ENCODE measurements at regions of chr2 and their contacts with region 1.

Region 1: GRCh38 chr2:174158003-174158402 is 90.3 kb downstream of the OLA1 start:
- DNase-seq: peak; percentile 75
- H3K4me3 Mint-ChIP-seq: no peak overlapping the region
- H3K27ac Mint-ChIP-seq: no peak overlapping the region
- H3K4me1 Mint-ChIP-seq: peaks cover 6% of the 10 kb centered on the region
- H3K27me3 Mint-ChIP-seq: no peaks in the 10 kb centered on the region

Region 2: GRCh38 chr2:174198822-174199564 is 41.0 kb after region 1 on chr2:
- intact Hi-C with region 1: no loop called
- DNase-seq: no peak
- H3K4me3 Mint-ChIP-seq: no peak overlapping the region
- H3K27ac Mint-ChIP-seq: no peak overlapping the region
- H3K4me1 Mint-ChIP-seq: no peaks in the 10 kb centered on the region
- H3K27me3 Mint-ChIP-seq: no peaks in the 10 kb centered on the region

Region 3: GRCh38 chr2:174326161-174327020 is 168.4 kb after region 1 on chr2:
- intact Hi-C with region 1: loop called (anchors 10 kb)
- DNase-seq: peak; percentile 76
- H3K4me3 Mint-ChIP-seq: peak overlapping the region; percentile 80
- H3K27ac Mint-ChIP-seq: no peak overlapping the region
- H3K4me1 Mint-ChIP-seq: peaks cover 16% of the 10 kb centered on the region
- H3K27me3 Mint-ChIP-seq: peaks cover 86% of the 10 kb centered on the region

Region 4: DNA sequence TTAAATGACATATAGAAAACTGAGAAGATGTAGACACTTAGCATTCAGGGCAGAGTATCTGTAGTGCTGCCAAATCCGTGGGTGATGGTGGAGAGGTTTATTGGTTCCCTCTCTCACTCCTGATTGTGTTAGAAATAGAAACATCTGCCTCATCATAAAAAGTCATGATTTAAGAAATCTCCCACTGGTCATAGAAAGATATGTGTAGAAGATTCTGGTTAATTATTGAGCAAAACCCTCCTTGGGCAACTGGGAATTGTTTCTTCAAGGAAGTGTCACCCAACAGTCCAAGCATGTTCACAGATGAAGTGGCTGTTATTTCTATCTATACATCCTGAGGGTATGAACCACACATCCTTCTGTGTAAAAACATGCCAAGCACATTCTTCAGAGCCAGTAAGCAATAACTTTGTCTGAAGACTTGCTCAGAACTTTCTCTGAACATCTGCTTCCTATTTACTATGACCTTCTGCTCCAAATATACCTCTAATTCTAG is 639.8 kb after region 1 on chr2:
- intact Hi-C with region 1: no loop called
- DNase-seq: no peak
- H3K4me3 Mint-ChIP-seq: no peak overlapping the region
- H3K27ac Mint-ChIP-seq: no peak overlapping the region
- H3K4me1 Mint-ChIP-seq: peaks cover 19% of the 10 kb centered on the region
- H3K27me3 Mint-ChIP-seq: no peaks in the 10 kb centered on the region